CD8-positive, alpha-beta T cell (primary cell): ENCODE measurements at regions of chr6 and their contacts with region 1.

Region 1: DNA sequence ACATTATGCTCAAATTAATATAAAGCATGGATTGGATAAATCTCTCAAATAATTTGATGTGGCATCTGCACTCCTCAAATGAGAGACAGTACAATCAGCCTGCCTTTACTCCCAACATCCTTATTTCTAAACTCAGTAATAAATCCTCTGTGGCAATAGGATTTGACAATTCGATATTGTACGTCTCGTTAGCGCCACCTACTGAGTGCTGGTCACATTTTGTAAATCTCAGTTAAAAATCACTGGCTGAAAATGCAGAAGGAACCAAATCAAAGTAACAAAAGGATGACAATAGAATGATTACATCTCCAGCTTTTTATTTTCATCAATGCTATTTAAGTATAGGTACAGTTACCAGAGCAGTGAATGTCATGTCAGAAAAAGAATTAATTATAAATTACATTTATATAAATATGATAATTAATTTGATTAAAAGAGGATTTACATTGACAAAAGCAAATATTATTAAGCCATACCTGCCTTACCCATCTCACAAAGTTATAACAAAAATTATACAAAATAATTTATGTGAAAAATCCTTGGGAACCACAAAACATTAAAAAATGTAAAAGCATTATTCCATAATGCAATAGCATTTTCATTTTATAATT is 20.2 kb upstream of the GJE1 start:
- DNase-seq: peak; percentile 19 to 79 (median 68)
- ATAC-seq: peak; percentile 44
- H3K4me3 ChIP-seq: no peak overlapping the region
- H3K4me3 Mint-ChIP-seq: no peak overlapping the region
- H3K27ac ChIP-seq: no peak overlapping the region
- H3K27ac Mint-ChIP-seq: no peak overlapping the region
- H3K4me1 ChIP-seq: no peaks in the 10 kb centered on the region
- H3K4me1 Mint-ChIP-seq: no peaks in the 10 kb centered on the region
- H3K27me3 ChIP-seq: no peaks in the 10 kb centered on the region
- H3K27me3 Mint-ChIP-seq: peaks cover 9% of the 10 kb centered on the region
- CTCF ChIP-seq: peak; percentile 85

Region 2: DNA sequence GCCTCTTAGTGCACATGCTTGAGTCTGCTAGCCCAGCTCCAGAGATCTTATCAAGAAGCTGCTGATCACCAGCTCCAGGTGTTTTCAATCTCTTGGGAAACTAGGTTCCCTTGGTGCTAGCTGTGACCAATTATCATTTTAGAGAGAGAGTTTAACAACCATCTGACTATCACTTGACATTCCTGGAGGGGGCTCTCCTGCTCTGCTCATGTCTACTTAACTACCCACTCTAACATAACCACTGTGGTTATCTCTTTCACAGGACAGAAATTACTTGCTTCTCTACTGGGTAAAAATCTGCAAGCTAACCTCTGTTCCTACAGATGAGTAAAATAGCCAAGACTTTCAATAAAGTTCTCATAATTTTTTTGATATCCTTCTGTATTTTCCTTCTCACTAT is 803.3 kb before region 1 on chr6:
- CTCF ChIA-PET with region 1: no interaction called
- POLR2A ChIA-PET with region 1: no interaction called
- intact Hi-C with region 1: loop called in 1 of 2 experiments (anchors 10 kb)
- DNase-seq: peak in 3 of 9 experiments; percentile 22 to 40 (median 38)
- ATAC-seq: peak; percentile 68
- H3K4me3 ChIP-seq: no peak overlapping the region
- H3K4me3 Mint-ChIP-seq: no peak overlapping the region
- H3K27ac ChIP-seq: no peak overlapping the region
- H3K27ac Mint-ChIP-seq: no peak overlapping the region
- H3K4me1 ChIP-seq: no peaks in the 10 kb centered on the region
- H3K4me1 Mint-ChIP-seq: no peaks in the 10 kb centered on the region
- H3K27me3 ChIP-seq: no peaks in the 10 kb centered on the region
- H3K27me3 Mint-ChIP-seq: no peaks in the 10 kb centered on the region
- CTCF ChIP-seq: no peak

Region 3: DNA sequence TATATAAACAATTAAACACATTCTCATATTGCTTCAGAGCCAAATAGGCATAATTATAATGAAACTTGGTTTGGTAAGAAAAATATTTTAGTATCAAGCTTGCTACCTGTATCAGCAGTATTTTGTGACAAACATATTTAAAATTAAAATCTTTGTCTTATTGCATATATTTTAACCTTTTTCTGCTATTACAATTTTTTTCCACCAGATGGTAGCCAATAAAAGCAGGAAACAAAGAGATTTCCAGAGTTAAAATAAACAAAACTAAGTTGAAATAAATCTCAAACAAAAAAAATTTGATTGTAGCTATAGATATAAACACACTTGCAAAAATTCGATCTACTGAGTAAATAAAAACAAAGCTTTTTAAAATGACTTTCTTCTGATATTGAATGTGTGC is 471.1 kb before region 1 on chr6:
- CTCF ChIA-PET with region 1: no interaction called
- POLR2A ChIA-PET with region 1: no interaction called
- intact Hi-C with region 1: loop called in 1 of 2 experiments (anchors 1 kb)
- DNase-seq: no peak
- ATAC-seq: no peak
- H3K4me3 ChIP-seq: no peak overlapping the region
- H3K4me3 Mint-ChIP-seq: no peak overlapping the region
- H3K27ac ChIP-seq: no peak overlapping the region
- H3K27ac Mint-ChIP-seq: no peak overlapping the region
- H3K4me1 ChIP-seq: no peaks in the 10 kb centered on the region
- H3K4me1 Mint-ChIP-seq: no peaks in the 10 kb centered on the region
- H3K27me3 ChIP-seq: no peaks in the 10 kb centered on the region
- H3K27me3 Mint-ChIP-seq: no peaks in the 10 kb centered on the region
- CTCF ChIP-seq: no peak

Region 4: GRCh38 chr6:141677598-141678211 is 434.9 kb before region 1 on chr6:
- CTCF ChIA-PET with region 1: interaction called, 4 read pairs
- POLR2A ChIA-PET with region 1: no interaction called
- intact Hi-C with region 1: loop called (anchors 1 kb)
- DNase-seq: peak in 2 of 9 experiments; percentile 35 to 48
- ATAC-seq: peak; percentile 40
- H3K4me3 ChIP-seq: no peak overlapping the region
- H3K4me3 Mint-ChIP-seq: no peak overlapping the region
- H3K27ac ChIP-seq: no peak overlapping the region
- H3K27ac Mint-ChIP-seq: no peak overlapping the region
- H3K4me1 ChIP-seq: no peaks in the 10 kb centered on the region
- H3K4me1 Mint-ChIP-seq: no peaks in the 10 kb centered on the region
- H3K27me3 ChIP-seq: no peaks in the 10 kb centered on the region
- H3K27me3 Mint-ChIP-seq: peaks cover 2% of the 10 kb centered on the region
- CTCF ChIP-seq: peak; percentile 54

Region 5: DNA sequence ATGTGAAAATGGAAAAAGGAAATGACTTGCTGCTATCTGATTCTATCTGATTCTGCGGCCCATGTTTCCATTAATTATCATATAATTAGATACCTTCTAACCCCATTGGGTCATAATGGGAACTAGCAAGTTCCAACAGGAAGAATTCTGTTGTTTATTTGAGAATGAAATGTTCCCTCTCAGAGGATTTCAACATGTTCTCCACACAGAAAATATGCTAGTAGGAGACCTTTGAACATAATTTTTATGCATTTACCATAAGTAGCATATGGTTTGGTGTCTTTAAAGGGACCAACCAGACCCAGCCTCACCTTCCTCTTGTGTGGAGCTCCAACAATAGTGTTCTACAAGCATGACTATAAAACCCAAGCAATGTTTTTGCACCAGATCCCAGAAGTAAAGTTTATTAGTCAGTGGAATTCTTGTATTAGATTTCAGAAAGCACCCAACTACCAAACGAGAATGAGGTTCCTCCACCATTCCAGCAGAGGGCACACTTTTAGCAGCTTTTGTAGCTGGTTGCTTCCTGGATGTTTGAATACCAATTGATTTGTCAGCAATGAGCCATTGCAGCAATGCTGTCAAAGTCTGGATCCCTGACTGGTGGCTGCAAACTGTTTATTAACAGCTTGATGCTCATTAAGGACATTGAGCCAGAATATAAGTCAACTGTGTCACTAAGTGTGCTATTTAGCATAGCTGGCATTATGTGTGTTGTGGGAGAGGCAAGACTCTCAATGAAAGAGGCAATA is 123.4 kb before region 1 on chr6:
- CTCF ChIA-PET with region 1: no interaction called
- POLR2A ChIA-PET with region 1: no interaction called
- intact Hi-C with region 1: loop called (anchors 5 kb)
- DNase-seq: peak in 2 of 9 experiments; percentile 39 to 48
- ATAC-seq: no peak
- H3K4me3 ChIP-seq: no peak overlapping the region
- H3K4me3 Mint-ChIP-seq: no peak overlapping the region
- H3K27ac ChIP-seq: no peak overlapping the region
- H3K27ac Mint-ChIP-seq: no peak overlapping the region
- H3K4me1 ChIP-seq: no peaks in the 10 kb centered on the region
- H3K4me1 Mint-ChIP-seq: no peaks in the 10 kb centered on the region
- H3K27me3 ChIP-seq: no peaks in the 10 kb centered on the region
- H3K27me3 Mint-ChIP-seq: peaks cover 4% of the 10 kb centered on the region
- CTCF ChIP-seq: peak; percentile 43